Posterior vena cava (tissue), 2 donors: ENCODE measurements at regions of chr2 and their contacts with region 1.

Region 1: DNA sequence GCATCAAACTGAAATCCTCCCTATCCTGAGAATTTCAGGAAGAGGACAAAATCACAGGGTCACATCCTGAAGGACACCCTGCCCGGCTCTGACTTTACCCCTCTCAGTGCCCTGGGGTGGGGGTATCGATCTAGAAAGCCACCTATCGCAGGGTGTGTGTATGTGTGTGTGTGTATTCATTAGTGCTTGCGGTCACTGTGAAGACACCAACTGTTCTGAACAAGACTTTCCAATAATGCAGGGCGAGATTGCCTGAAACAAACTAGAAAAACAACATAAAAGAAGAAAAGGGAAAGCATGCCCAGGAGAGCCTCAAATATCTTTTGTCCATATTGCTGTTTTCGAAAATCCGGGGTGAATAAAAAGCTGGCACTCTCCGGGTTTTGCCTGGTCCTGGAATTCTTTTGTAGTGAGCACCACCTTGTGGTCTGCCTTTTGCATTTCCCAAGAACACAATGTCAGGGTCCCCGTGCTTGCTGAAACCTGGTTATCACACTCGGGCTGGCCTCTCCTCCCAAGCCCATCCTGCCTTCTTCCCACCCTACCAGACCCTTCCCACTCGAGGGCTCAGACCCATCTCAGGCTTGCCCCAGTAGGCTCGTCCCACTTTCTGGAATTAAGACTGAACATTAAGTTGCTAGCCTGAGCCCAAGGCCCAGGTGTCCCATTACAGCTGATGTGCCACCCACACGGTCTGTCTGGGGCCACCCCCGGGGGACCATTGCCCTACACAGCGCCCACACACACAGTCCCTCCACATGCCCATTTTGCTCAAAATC is 25.0 kb upstream of the COPS8 start:
- DNase-seq: no peak

Region 2: DNA sequence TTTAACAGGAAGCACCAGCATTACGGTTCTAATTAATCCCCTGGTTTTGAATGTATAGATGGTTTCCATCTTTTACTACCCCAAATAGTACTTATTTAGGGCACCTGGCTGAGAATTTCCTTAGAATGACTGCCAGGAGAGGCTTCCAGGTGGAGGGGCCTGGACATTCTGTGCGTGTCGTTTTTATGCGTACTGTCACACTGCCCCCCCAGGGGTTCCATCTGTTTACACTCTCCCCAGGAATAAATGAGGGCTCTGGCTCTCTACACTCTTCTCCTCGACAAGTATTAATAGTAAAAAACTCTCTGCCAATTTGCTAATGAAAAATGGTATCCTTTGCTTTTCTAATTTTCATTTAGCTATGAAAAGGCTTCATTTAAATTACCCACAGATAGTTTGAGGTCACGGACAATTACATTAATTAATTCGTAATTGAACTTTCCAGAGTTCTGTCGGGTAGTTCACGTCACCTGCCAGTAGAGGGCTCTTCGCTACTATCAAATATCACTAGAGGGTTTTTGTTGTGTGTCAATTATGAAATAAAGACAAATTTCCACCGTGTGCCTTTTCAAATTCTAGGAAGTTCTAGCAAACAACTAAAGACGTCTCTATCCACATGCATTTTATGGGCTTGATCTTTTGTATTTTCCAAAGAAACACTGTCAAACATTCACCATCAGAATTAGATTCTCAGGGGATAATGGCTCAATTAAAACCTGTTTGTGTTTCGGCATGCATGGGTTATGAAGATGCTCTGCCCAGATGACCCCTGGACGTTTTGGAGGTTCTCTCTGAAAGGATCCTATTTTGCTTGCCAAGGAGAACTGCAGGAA is 707.7 kb before region 1 on chr2:
- intact Hi-C with region 1: loop called (anchors 5 kb)
- DNase-seq: no peak